Endothelial cell of umbilical vein (primary cell): ENCODE measurements at regions of chr17 and their contacts with region 1.

Region 1: GRCh38 chr17:40909351-40909750 is 24.3 kb upstream of the KRT20 start:
- DNase-seq: peak; percentile 90
- H3K4me3 ChIP-seq: no peak overlapping the region
- H3K27ac ChIP-seq: no peak overlapping the region
- H3K4me1 ChIP-seq: peaks cover 13% of the 10 kb centered on the region
- H3K27me3 ChIP-seq: peaks cover 0 to 3% of the 10 kb centered on the region in 2 experiments
- CTCF ChIP-seq: peak; percentile 75 to 77
- POLR2A ChIP-seq: no peak

Region 2: DNA sequence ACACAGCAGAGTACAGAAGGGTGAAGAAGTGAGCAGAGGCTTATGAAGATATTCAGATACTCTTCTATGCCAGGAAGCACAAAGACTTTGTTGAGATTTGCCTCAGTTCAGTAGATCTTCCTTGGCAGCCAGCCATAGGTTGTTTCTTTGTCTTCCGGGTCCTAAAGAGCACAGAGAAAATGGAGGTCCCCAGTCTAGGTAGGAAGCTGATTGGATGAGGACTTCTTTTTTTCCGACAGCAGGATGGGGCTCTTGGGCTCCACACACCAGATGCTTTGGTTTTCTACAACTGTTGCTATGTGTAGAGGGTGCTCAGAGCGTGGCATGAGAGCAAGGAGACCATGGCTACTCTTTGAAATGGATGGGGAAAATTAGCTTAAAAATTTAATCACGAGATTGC is 629.9 kb before region 1 on chr17:
- CTCF ChIA-PET with region 1: no interaction called
- POLR2A ChIA-PET with region 1: no interaction called
- dilution Hi-C with region 1: no loop called
- intact Hi-C with region 1: no loop called
- DNase-seq: no peak
- H3K4me3 ChIP-seq: no peak overlapping the region
- H3K27ac ChIP-seq: no peak overlapping the region
- H3K4me1 ChIP-seq: peaks cover 13% of the 10 kb centered on the region
- H3K27me3 ChIP-seq: no peaks in the 10 kb centered on the region
- CTCF ChIP-seq: no peak
- POLR2A ChIP-seq: no peak

Region 3: DNA sequence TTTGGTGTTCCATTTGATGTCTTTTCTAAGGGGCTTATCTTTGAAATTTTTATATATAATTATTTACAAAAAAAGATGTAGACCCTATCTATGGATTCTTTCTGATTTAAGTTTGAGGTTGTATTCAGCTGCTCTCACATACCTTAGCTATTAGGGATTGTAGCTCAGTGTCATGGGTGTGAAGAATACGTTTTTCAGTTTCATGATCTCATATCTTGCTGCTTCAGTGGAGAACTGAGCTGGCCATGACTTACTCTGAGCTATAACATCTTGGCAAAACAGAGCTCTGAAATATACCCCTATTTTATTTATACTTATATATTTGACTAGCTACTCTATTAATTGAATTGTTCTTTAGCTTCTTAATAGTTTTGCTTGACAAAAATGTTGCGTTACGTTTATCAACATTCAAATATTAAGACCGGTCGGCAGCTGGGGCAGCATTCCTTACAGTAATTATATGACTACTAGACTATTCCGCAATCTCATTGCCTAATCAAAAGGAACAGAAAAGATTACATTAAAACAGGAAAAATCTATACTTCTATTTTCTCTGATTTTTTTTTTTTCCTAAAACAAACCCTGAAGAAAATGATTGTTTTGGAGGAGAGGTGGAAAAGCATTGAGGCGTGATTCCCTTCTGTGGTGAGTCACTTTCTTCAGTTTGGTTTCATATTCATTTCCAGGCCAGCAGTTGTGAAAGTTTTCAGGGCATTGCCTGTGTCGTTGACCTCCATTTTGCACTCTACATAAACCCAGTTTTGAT is 181.7 kb before region 1 on chr17:
- CTCF ChIA-PET with region 1: no interaction called
- POLR2A ChIA-PET with region 1: no interaction called
- dilution Hi-C with region 1: no loop called
- intact Hi-C with region 1: no loop called
- DNase-seq: no peak
- H3K4me3 ChIP-seq: no peak overlapping the region
- H3K27ac ChIP-seq: no peak overlapping the region
- H3K4me1 ChIP-seq: no peaks in the 10 kb centered on the region
- H3K27me3 ChIP-seq: peaks cover 7 to 9% of the 10 kb centered on the region in 2 experiments
- CTCF ChIP-seq: no peak
- POLR2A ChIP-seq: no peak

Region 4: GRCh38 chr17:40803617-40804082 is 105.7 kb before region 1 on chr17:
- CTCF ChIA-PET with region 1: no interaction called
- POLR2A ChIA-PET with region 1: no interaction called
- dilution Hi-C with region 1: no loop called
- intact Hi-C with region 1: loop called (anchors 1 kb)
- DNase-seq: peak; percentile 71
- H3K4me3 ChIP-seq: no peak overlapping the region
- H3K27ac ChIP-seq: no peak overlapping the region
- H3K4me1 ChIP-seq: no peaks in the 10 kb centered on the region
- H3K27me3 ChIP-seq: peaks cover 20 to 39% of the 10 kb centered on the region in 2 experiments
- CTCF ChIP-seq: peak; percentile 85 to 88
- POLR2A ChIP-seq: no peak

Region 5: GRCh38 chr17:40895106-40895730 is 14.1 kb before region 1 on chr17:
- CTCF ChIA-PET with region 1: no interaction called
- POLR2A ChIA-PET with region 1: no interaction called
- dilution Hi-C with region 1: no loop called
- intact Hi-C with region 1: no loop called
- DNase-seq: no peak
- H3K4me3 ChIP-seq: no peak overlapping the region
- H3K27ac ChIP-seq: no peak overlapping the region
- H3K4me1 ChIP-seq: no peaks in the 10 kb centered on the region
- H3K27me3 ChIP-seq: peaks cover 3% of the 10 kb centered on the region in 2 experiments
- CTCF ChIP-seq: no peak
- POLR2A ChIP-seq: no peak

Region 6: GRCh38 chr17:40937384-40937819 is 28.1 kb after region 1 on chr17 and contains the start of gene KRT23:
- CTCF ChIA-PET with region 1: no interaction called
- POLR2A ChIA-PET with region 1: no interaction called
- dilution Hi-C with region 1: no loop called
- intact Hi-C with region 1: no loop called
- DNase-seq: no peak
- H3K4me3 ChIP-seq: no peak within 1 kb of the TSS
- H3K27ac ChIP-seq: no peak within 1 kb of the TSS
- H3K4me1 ChIP-seq: no peaks in the 10 kb centered on the region
- H3K27me3 ChIP-seq: peaks cover 7 to 8% of the 10 kb centered on the region in 2 experiments
- CTCF ChIP-seq: no peak
- POLR2A ChIP-seq: no peak
- total RNA-seq, gene KRT23: not detected in 2 replicates

Region 7: DNA sequence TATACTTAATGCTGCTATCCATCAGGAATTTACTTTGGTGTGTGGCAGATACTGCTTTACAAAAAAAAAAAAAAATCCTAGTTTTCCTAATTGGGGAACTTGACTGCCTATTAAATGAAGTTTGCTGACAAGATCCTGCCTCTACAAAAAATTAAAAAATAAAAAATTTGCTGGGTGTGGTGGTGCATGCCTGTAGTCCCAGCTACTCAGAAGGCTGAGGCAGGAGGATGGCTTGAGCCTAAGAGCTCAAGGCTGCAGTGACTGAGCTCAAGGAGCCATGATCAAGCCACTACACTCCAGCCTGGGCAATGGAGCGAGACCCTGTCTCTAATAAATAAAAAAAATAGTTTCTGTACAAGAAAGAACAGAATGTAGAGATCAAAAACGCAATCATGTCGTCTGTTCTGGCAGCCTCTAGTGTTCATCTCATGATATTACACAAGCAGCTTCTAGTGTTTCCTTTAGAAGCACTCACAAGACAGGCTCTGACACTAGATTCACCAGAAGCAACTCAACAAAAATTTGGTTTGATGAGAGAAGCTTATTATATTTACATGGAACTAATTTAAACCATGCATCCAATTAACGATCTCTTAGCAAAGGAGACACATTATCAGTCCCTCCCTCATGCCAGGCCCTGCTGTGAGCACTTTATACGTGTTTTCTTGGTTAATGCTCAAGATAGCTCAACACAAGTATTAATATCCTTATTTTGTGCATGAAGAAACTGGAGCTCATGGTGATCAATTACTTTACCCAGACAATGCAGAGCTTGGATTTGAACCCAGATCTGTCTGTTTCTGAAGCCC is 412.9 kb after region 1 on chr17:
- CTCF ChIA-PET with region 1: interaction called, 34 read pairs
- POLR2A ChIA-PET with region 1: no interaction called
- dilution Hi-C with region 1: no loop called
- intact Hi-C with region 1: loop called (anchors 1 kb)
- DNase-seq: peak; percentile 49
- H3K4me3 ChIP-seq: no peak overlapping the region
- H3K27ac ChIP-seq: no peak overlapping the region
- H3K4me1 ChIP-seq: no peaks in the 10 kb centered on the region
- H3K27me3 ChIP-seq: peaks cover 0 to 2% of the 10 kb centered on the region in 2 experiments
- CTCF ChIP-seq: peak; percentile 40 to 69
- POLR2A ChIP-seq: no peak

Region 8: DNA sequence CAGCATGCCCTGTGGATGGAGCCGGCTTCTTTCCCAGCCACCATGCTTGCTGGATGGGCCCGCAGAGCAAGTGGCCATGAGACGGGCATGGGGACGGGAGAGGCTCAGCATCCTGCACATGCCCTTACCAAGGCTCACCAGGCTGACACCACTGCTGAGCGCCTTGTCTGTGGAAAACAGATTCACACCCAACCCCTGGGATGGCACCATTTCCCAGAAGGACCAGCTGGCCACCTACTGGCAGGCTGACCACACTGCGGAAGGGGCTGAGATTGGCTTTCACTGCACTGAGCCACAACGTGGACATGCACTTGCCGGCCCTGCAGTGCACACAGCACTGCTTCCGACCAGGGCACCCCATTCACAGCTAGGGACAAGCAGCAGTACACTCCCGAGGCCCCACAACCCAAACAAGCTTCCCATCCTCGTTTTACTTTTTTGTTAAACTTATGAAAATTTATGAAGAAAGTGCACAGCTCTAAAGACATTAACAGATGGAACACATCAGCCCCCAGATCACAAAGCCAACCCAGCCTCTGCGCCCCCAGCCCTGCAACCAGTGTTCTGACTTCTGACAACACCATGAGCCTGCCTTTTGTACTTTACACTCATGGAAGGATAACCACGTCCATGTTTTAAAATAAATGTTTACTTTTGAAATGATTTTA is 420.1 kb after region 1 on chr17:
- CTCF ChIA-PET with region 1: interaction called, 16 read pairs
- POLR2A ChIA-PET with region 1: no interaction called
- dilution Hi-C with region 1: no loop called
- intact Hi-C with region 1: loop called (anchors 1 kb)
- DNase-seq: peak; percentile 44
- H3K4me3 ChIP-seq: no peak overlapping the region
- H3K27ac ChIP-seq: no peak overlapping the region
- H3K4me1 ChIP-seq: no peaks in the 10 kb centered on the region
- H3K27me3 ChIP-seq: no peaks in the 10 kb centered on the region
- CTCF ChIP-seq: peak; percentile 77 to 87
- POLR2A ChIP-seq: no peak

Region 9: GRCh38 chr17:41496820-41497408 is 587.6 kb after region 1 on chr17:
- CTCF ChIA-PET with region 1: interaction called, 8 read pairs
- POLR2A ChIA-PET with region 1: no interaction called
- dilution Hi-C with region 1: no loop called
- intact Hi-C with region 1: loop called (anchors 1 kb)
- DNase-seq: peak; percentile 83
- H3K4me3 ChIP-seq: no peak overlapping the region
- H3K27ac ChIP-seq: no peak overlapping the region
- H3K4me1 ChIP-seq: peaks cover 38% of the 10 kb centered on the region
- H3K27me3 ChIP-seq: no peaks in the 10 kb centered on the region
- CTCF ChIP-seq: peak; percentile 91 to 92
- POLR2A ChIP-seq: no peak